Activated CD4-positive, alpha-beta T cell treated with anti-CD3 and anti-CD28 coated beads for 36 hours (primary cell): ENCODE measurements at regions of chr4 and their contacts with region 1.

Region 1: DNA sequence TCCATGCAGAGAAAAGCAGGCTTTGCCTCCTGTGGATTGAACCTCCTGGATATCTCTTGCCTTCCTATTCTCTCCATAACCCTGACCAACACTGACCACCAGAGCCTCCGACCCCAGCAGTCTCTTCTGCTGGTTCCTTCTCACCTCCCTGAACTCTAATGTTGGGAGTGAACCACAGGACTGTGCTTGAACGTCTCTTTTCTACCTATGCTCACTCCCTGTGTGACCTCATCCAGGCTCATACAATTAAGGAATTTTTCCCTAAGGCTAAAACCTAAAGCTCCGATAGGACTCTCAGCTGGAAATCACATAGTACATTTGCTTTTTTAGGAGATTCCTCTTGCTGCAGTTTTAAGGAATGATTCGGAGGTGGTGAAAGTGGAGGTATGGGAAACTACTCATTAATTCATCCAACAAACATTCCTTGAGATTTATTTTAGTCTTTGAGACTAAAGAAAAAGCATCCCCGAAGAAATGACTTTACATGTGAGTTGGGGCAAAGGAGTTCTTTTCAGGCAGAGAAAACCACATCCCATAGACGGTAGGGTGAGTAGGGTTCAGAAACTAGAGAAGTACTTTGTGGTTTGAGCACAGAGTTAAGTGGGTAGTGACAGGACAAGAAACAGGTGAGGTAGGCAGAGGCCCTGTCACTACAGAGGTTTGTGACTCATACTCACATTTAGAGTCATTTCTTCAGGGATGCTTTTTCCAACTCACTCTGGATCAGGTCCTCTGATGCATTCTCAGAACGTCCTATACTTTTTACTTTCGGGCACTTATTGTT is 30.8 kb downstream of the NDNF start:
- DNase-seq: peak; percentile 55
- ATAC-seq: peak; percentile 100
- H3K4me3 Mint-ChIP-seq: no peak overlapping the region
- H3K27ac Mint-ChIP-seq: no peak overlapping the region
- H3K4me1 Mint-ChIP-seq: peaks cover 13% of the 10 kb centered on the region
- H3K27me3 Mint-ChIP-seq: peaks cover 26% of the 10 kb centered on the region

Region 2: GRCh38 chr4:120843849-120844527 is 197.5 kb before region 1 on chr4:
- CTCF ChIA-PET with region 1: no interaction called
- POLR2A ChIA-PET with region 1: no interaction called
- intact Hi-C with region 1: loop called in 1 of 2 experiments (anchors 10 kb)
- DNase-seq: peak; percentile 39
- ATAC-seq: no peak
- H3K4me3 Mint-ChIP-seq: no peak overlapping the region
- H3K27ac Mint-ChIP-seq: no peak overlapping the region
- H3K4me1 Mint-ChIP-seq: peaks cover 20% of the 10 kb centered on the region
- H3K27me3 Mint-ChIP-seq: peaks cover 3% of the 10 kb centered on the region

Region 3: GRCh38 chr4:120886191-120886590 is 155.3 kb before region 1 on chr4:
- CTCF ChIA-PET with region 1: no interaction called
- POLR2A ChIA-PET with region 1: no interaction called
- intact Hi-C with region 1: no loop called
- DNase-seq: no peak
- ATAC-seq: no peak
- H3K4me3 Mint-ChIP-seq: no peak overlapping the region
- H3K27ac Mint-ChIP-seq: no peak overlapping the region
- H3K4me1 Mint-ChIP-seq: no peaks in the 10 kb centered on the region
- H3K27me3 Mint-ChIP-seq: peaks cover 5% of the 10 kb centered on the region

Region 4: GRCh38 chr4:120922381-120923206 is 118.9 kb before region 1 on chr4 and contains the start of gene PRDM5:
- CTCF ChIA-PET with region 1: no interaction called
- POLR2A ChIA-PET with region 1: no interaction called
- intact Hi-C with region 1: loop called (anchors 2 to 5 kb)
- DNase-seq: peak; percentile 49
- ATAC-seq: peak; percentile 68
- H3K4me3 Mint-ChIP-seq: peak within 1 kb of the TSS; percentile 74
- H3K27ac Mint-ChIP-seq: peak within 1 kb of the TSS; percentile 28
- H3K4me1 Mint-ChIP-seq: peaks cover 17% of the 10 kb centered on the region
- H3K27me3 Mint-ChIP-seq: peaks cover 30% of the 10 kb centered on the region
- total RNA-seq, gene PRDM5: 0.05 TPM in 1 of 2 experiments, not detected in the other

Region 5: GRCh38 chr4:121112530-121112929 is 71.0 kb after region 1 on chr4:
- CTCF ChIA-PET with region 1: no interaction called
- POLR2A ChIA-PET with region 1: no interaction called
- intact Hi-C with region 1: loop called in 1 of 2 experiments (anchors 2 kb)
- DNase-seq: no peak
- ATAC-seq: no peak
- H3K4me3 Mint-ChIP-seq: no peak overlapping the region
- H3K27ac Mint-ChIP-seq: no peak overlapping the region
- H3K4me1 Mint-ChIP-seq: peaks cover 23% of the 10 kb centered on the region
- H3K27me3 Mint-ChIP-seq: no peaks in the 10 kb centered on the region

Region 6: GRCh38 chr4:121155893-121156292 is 114.4 kb after region 1 on chr4:
- CTCF ChIA-PET with region 1: interaction called, 4 read pairs
- POLR2A ChIA-PET with region 1: no interaction called
- intact Hi-C with region 1: loop called in 1 of 2 experiments (anchors 5 kb)
- DNase-seq: no peak
- ATAC-seq: no peak
- H3K4me3 Mint-ChIP-seq: peak overlapping the region; percentile 4
- H3K27ac Mint-ChIP-seq: no peak overlapping the region
- H3K4me1 Mint-ChIP-seq: peaks cover 53% of the 10 kb centered on the region
- H3K27me3 Mint-ChIP-seq: peaks cover 12% of the 10 kb centered on the region

Region 7: DNA sequence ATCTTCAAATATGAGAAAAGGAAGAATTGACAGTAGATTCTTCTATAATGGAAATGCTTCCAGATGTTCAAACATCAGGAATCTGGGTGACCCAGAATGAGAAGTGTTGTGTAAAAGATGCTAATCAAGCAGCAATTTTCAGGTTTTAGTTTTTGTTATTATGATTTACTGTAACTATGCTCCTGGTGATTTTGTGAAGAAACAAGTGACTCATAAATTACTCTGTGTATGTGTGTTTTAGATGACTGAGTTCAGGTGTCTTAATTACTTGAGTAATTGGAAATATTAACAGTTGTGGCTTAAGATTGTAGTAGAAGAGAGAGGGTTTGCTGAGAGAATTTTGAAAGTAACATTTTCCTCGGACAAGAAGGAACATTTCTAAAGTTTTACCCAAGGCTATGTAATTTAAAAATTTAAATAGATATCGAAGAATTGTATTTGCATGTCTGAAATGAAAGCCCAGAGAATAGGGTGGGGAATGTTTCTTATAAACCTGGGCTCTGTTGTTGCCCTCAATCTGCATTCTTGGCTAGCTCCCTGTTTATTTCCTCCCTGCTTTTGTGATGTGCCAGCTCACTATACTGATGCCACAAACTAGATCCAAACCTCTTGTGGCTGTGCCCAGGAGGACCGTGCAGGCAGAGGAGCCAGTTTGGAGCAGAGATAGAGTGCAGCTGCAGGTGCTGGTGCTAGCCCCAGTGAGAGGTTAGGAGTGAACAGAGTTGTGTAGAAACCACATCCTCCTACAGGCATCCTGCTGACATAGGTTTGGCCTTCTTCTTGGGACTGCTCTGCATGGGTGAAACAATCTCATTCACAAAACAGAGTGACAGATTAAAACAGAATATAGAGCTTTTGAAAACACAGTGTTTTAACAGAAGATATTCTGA is 148.1 kb after region 1 on chr4:
- CTCF ChIA-PET with region 1: no interaction called
- POLR2A ChIA-PET with region 1: no interaction called
- intact Hi-C with region 1: no loop called
- DNase-seq: peak; percentile 58
- ATAC-seq: peak; percentile 94
- H3K4me3 Mint-ChIP-seq: peak overlapping the region; percentile 24
- H3K27ac Mint-ChIP-seq: peak overlapping the region; percentile 81
- H3K4me1 Mint-ChIP-seq: peaks cover 69% of the 10 kb centered on the region
- H3K27me3 Mint-ChIP-seq: no peaks in the 10 kb centered on the region